ENCODE measurements at regions of chr14 and their contacts with region 1.

Region 1: DNA sequence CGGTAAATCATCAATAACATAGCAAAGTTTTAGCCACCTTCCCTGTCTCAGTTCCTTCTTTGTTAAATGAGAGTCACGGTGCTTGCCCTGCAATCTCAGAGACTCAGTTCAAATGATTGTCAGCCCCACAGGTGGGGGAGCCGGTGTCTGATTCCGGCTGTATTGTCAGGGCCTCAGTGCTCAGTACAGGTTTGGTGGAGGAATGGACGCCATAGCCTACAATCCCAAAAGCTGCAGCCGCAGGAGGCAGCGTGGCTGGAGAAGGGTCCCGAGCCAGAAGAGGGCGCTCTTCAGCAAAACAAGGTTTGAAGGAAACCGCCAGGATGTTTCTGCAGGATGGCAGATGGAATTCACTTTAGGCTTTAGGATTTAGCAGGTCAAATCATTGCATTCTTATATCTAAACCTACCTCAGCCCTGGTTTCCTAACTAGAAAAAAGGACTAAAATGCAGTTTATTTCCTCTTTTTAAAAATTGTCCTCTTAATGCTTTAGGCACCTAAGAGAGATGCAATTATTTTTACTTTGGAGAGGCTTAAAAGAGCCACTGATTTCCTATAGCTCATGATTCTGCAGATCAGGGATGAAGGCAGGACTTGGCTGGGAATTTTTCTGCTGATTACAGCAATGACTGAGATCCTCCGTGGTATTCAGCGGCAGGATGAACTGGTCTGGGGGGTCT is 29.2 kb downstream of the FOS start:
- DNase-seq: peak; percentile 90
- ATAC-seq: peak; percentile 50 to 54

Region 2: GRCh38 chr14:75132382-75133086 is 175.3 kb before region 1 on chr14:
- intact Hi-C with region 1: loop called (anchors 2 to 5 kb)
- DNase-seq: no peak
- ATAC-seq: peak; percentile 79 to 84

Region 3: DNA sequence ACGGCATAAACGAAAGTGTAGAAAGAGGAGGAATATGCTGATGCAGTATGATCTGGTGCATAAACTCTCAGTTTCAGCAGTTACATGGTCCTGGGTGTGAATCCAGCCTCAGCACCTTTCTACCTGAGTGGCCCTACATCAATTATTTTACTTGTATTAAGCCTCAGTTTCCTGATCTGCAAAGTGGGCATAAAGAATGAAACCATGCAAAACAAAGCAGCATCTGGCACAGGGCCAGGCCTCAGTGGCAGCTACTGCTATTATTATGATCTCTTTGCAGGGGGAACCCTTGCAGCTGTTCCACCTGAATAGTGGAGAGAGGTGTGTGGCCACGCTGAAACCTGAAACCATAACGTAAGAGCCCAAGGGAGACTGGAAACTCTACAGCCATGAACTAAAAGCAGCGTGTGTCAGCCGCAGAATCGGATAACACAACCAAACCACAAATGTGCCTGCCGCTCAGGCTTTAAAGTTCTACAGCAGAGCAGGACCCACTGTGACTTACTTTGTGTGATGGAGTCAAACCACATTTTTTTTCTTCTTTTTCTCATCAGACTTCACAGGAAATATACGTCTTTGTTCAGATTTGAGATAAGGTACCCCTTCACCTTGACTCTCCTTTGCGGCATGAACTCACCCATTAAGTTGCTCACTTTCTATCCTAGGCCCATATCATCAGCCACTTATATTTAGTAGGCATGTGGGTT is 58.4 kb before region 1 on chr14:
- intact Hi-C with region 1: no loop called
- DNase-seq: no peak
- ATAC-seq: peak in 1 of 2 donors; percentile 71

Region 4: DNA sequence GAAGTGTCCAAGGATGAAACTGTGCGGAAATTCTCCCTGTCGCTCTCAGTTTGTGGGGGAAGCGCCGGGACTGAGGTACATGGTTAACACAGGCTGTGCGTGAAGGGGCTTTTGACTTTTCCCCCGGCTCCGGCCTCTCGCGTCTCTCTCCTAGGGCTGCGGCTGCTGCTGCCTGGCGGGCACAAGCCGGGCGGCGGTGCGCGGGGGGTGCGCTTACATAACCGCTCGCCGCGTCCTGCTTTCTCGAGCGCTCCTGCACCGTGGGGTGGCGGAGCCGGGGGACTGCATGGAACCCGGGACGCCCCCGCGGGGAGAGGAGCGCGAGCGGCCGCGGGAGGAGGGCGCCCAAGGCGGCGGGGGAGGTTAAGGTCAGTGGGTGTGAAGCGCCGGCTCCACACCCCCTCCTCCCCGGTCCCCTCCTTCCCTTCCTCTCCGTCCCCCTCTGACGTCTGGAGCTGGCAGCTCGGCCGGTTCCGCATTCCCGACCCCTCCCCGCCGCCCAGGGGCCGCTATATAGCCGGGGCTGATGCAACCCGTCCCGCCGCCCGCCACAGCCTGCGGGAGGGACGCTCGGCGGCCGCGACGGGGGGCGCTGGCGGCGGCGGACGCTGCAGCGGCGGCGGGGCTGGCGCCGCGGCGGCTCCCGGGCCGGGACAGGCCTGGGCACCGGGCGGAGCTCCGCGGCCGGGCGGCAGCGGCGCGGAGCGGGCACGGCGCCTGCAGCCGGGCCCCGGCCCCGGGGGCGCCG is 119.8 kb after region 1 on chr14 and contains the start of gene JDP2:
- intact Hi-C with region 1: loop called in 1 of 2 experiments (anchors 5 kb)
- DNase-seq: peak; percentile 96
- ATAC-seq: peak; percentile 92 to 93
- total RNA-seq, gene JDP2: 30.5 to 32.7 TPM

Region 5: DNA sequence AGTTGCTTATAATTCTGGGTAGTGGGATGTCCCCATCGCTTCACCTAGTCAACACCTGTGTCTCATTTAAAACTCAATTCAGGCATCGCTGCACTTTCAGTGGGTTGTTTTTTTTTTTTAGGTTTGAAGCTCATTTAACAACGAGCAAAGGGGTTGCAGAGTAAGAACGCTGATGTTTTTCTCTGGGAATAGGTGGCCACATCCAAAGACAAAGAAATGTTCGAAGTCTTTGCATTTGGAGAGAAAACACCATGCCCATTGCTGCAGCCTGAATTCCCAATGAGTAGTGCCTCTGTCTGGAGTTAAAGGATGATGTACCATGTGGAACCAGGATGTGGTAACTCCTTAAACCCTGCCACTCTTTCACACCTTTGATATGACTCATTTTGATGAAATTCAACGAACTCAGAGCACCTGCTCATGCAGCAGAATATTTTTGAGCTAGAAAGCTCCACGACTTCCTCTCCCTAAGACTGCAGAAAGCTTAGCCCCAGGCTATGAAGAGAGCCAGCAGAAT is 179.4 kb after region 1 on chr14:
- intact Hi-C with region 1: loop called (anchors 1 to 5 kb)
- DNase-seq: no peak
- ATAC-seq: no peak

Region 6: GRCh38 chr14:75560962-75561432 is 253.2 kb after region 1 on chr14:
- intact Hi-C with region 1: loop called in 1 of 2 experiments (anchors 5 kb)
- DNase-seq: peak; percentile 72
- ATAC-seq: peak; percentile 75 to 89